ENCODE measurements at regions of chr14 and their contacts with region 1.

Region 1: DNA sequence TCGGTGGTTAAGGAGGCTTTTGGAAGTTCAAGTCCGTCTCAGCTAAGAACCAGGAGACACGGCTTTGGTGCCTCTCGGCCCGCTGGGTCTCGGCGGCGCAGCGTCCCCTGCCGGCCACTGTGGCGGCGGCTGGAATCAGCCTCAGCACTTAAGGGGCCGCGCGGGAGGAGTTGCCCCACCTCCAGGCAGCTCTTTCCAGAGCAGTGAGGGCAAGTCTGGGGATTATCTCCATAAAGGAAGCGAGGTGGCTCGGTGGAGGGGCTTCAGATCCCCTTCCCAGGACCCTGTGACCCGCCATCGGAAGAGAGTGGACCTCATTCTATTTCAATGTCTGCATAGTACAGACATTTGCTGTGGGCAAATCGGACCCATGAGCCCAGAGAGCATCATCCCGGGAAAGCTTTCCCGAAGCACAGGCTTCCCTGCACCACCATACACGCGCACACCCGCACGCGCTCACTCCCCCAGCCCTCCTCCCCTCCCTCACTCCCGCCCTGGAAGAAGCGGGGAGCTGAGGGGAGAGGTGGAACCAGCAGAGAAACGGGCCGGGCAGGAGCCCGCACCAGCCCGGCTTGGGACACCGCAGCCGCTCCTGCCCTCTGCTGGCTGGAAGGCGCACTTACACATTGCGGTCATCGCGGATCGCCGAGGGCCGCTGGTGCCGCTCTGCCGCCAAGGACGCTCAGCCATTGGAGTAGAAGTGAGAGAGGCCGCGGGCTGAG is 15.9 kb downstream of the RNASE2 start:
- DNase-seq: peak; percentile 72 to 79 (median 76)
- H3K4me3 ChIP-seq: peak overlapping the region; percentile 68 to 79
- H3K4me3 Mint-ChIP-seq: peak overlapping the region; percentile 88 to 95 (median 91)
- H3K27ac ChIP-seq: peak overlapping the region; percentile 3
- H3K27ac Mint-ChIP-seq: peak overlapping the region; percentile 51 to 93 (median 81)
- H3K4me1 ChIP-seq: peaks cover 15% of the 10 kb centered on the region
- H3K4me1 Mint-ChIP-seq: peaks cover 3 to 14% (median 10%) of the 10 kb centered on the region in 4 donors
- H3K27me3 ChIP-seq: no peaks in the 10 kb centered on the region
- H3K27me3 Mint-ChIP-seq: peaks cover 11 to 12% of the 10 kb centered on the region in 2 donors

Region 2: GRCh38 chr14:20697273-20698017 is 273.7 kb before region 1 on chr14:
- CTCF ChIA-PET with region 1: interaction called, 31 read pairs
- POLR2A ChIA-PET with region 1: no interaction called
- intact Hi-C with region 1: loop called (anchors 1 kb)
- DNase-seq: peak; percentile 55 to 65 (median 60)
- H3K4me3 ChIP-seq: no peak overlapping the region
- H3K4me3 Mint-ChIP-seq: no peak overlapping the region
- H3K27ac ChIP-seq: no peak overlapping the region
- H3K27ac Mint-ChIP-seq: no peak overlapping the region
- H3K4me1 ChIP-seq: no peaks in the 10 kb centered on the region
- H3K4me1 Mint-ChIP-seq: no peaks in the 10 kb centered on the region
- H3K27me3 ChIP-seq: no peaks in the 10 kb centered on the region
- H3K27me3 Mint-ChIP-seq: no peaks in the 10 kb centered on the region

Region 3: DNA sequence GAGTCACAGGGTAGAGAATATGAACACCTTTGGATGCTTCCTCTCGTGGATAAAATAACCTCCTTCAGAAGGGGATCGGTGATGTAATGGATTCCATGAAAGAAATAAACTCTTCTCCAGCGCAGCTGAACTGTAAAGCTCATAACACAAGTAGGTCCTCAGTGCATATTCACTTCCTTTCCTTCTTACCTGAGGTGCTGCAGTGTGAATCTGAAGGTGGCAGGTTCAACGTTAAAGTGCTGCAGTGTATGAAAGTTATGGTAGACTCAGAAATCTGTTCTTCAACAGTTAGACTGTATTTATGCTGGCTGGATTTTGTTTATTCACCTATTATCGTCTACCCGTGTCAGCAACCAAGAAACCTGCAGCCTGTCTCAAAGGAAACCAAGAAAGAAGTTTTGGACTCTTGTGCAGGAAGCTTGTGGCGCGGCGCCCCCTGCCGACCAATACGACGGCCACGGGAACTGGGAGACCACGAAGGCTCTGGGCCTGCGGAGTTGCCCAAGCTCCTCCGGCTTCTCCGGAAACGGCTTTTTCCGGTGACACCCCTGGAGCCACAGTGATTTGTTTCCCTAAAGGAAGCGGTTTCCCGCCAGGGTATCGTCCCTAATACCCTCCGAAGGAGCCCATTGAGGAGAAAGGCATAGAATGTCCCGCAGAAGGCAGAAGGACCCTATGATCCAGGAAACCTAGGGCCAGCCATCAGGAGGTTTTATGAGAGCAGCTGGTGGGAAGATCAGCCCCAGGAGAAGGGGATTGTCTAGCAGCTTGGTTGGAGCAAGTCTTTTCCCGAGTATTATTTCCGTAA is 97.6 kb before region 1 on chr14:
- CTCF ChIA-PET with region 1: interaction called, 4 read pairs
- POLR2A ChIA-PET with region 1: no interaction called
- intact Hi-C with region 1: loop called (anchors 5 kb)
- DNase-seq: peak; percentile 63 to 70 (median 66)
- H3K4me3 ChIP-seq: no peak overlapping the region
- H3K4me3 Mint-ChIP-seq: peak overlapping the region in 4 of 8 donors; percentile 17 to 60 (median 20)
- H3K27ac ChIP-seq: no peak overlapping the region
- H3K27ac Mint-ChIP-seq: peak overlapping the region in 1 of 7 donors; percentile 13
- H3K4me1 ChIP-seq: peaks cover 11% of the 10 kb centered on the region
- H3K4me1 Mint-ChIP-seq: peaks cover 5 to 16% (median 8%) of the 10 kb centered on the region in 4 donors
- H3K27me3 ChIP-seq: peaks cover 4% of the 10 kb centered on the region
- H3K27me3 Mint-ChIP-seq: peaks cover 6 to 12% of the 10 kb centered on the region in 2 donors

Region 4: GRCh38 chr14:20956376-20956976 is 14.7 kb before region 1 on chr14:
- CTCF ChIA-PET with region 1: interaction called, 30 read pairs
- POLR2A ChIA-PET with region 1: no interaction called
- intact Hi-C with region 1: loop called (anchors 1 kb)
- DNase-seq: peak in 2 of 5 donors; percentile 9 to 10
- H3K4me3 ChIP-seq: no peak overlapping the region
- H3K4me3 Mint-ChIP-seq: peak overlapping the region in 2 of 8 donors; percentile 35 to 65
- H3K27ac ChIP-seq: no peak overlapping the region
- H3K27ac Mint-ChIP-seq: peak overlapping the region in 6 of 7 donors; percentile 17 to 75 (median 50)
- H3K4me1 ChIP-seq: peaks cover 9% of the 10 kb centered on the region
- H3K4me1 Mint-ChIP-seq: peaks cover 8 to 14% (median 11%) of the 10 kb centered on the region in 4 donors
- H3K27me3 ChIP-seq: no peaks in the 10 kb centered on the region
- H3K27me3 Mint-ChIP-seq: peaks cover 5 to 10% of the 10 kb centered on the region in 2 donors

Region 5: DNA sequence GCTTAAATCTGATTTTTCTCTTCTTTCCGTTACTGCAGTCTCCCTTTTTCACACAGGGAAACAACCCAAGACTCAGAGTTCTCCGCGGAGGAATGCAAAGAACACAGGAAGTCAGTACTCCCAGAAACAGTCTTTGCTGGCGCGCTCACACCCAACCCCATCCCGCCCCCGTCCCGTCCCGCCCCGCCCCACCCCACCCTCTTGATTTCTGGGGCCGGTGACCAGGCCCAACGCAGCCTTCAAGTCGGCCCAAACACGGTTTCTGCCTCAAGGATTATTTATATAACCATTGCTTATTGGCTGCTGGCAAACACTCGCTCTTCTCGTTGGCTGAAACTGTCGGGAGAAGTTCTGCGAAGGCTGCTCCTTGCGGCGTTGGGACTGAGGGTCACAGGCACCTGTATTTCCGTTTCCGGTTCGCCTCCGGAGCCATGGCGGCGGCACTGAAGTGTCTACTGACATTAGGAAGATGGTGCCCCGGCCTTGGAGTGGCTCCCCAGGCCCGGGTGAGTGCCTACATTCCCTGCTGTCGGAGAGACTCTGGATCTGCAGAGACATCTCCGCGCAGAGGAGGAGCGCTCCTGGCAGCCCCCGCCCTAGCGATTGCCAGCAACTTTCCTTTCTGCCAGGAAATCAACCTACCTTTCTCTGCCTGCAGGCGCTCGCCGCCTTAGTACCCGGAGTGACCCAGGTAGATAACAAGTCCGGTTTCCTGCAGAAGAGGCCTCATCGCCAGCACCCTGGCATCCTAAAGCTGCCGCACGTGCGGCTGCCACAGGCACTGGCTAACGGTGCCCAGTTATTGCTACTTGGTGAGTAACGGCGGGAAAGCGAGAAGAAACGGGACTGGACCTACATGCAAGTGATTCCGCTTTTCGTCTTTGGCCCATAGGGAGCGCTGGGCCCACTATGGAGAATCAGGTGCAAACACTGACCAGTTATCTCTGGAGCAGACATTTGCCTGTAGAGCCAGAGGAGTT is 18.7 kb after region 1 on chr14 and contains the start of gene METTL17:
- CTCF ChIA-PET with region 1: interaction called, 78 read pairs
- POLR2A ChIA-PET with region 1: no interaction called
- intact Hi-C with region 1: loop called (anchors 1 kb)
- DNase-seq: peak; percentile 82 to 90 (median 85)
- H3K4me3 ChIP-seq: peak within 1 kb of the TSS; percentile 79 to 93
- H3K4me3 Mint-ChIP-seq: peak within 1 kb of the TSS; percentile 90 to 97 (median 96)
- H3K27ac ChIP-seq: peak within 1 kb of the TSS; percentile 73
- H3K27ac Mint-ChIP-seq: peak within 1 kb of the TSS; percentile 87 to 98 (median 96)
- H3K4me1 ChIP-seq: peaks cover 24% of the 10 kb centered on the region
- H3K4me1 Mint-ChIP-seq: peaks cover 15 to 39% (median 22%) of the 10 kb centered on the region in 4 donors
- H3K27me3 ChIP-seq: no peaks in the 10 kb centered on the region
- H3K27me3 Mint-ChIP-seq: no peaks in the 10 kb centered on the region
- total RNA-seq, gene METTL17: 119 to 125 TPM

Region 6: GRCh38 chr14:20998664-20999366 is 27.7 kb after region 1 on chr14 and contains the start of gene SLC39A2:
- CTCF ChIA-PET with region 1: interaction called, 13 read pairs
- POLR2A ChIA-PET with region 1: no interaction called
- intact Hi-C with region 1: no loop called
- DNase-seq: no peak
- H3K4me3 ChIP-seq: no peak within 1 kb of the TSS
- H3K4me3 Mint-ChIP-seq: no peak within 1 kb of the TSS
- H3K27ac ChIP-seq: no peak within 1 kb of the TSS
- H3K27ac Mint-ChIP-seq: peak within 1 kb of the TSS in 4 of 7 donors; percentile 54 to 92 (median 74)
- H3K4me1 ChIP-seq: no peaks in the 10 kb centered on the region
- H3K4me1 Mint-ChIP-seq: peaks cover 7 to 17% (median 11%) of the 10 kb centered on the region in 4 donors
- H3K27me3 ChIP-seq: no peaks in the 10 kb centered on the region
- H3K27me3 Mint-ChIP-seq: no peaks in the 10 kb centered on the region
- total RNA-seq, gene SLC39A2: 0.67 TPM in 1 of 2 experiments, not detected in the other